HCT116 (cell line): ENCODE measurements at regions of chr22 and their contacts with region 1.

Region 1: GRCh38 chr22:50030297-50031188 is 18.0 kb upstream of the IL17REL start:
- DNase-seq: peak; percentile 75
- ATAC-seq: peak; percentile 95
- H3K4me3 ChIP-seq: peak overlapping the region; percentile 41 to 55
- H3K27ac ChIP-seq: no peak overlapping the region
- H3K4me1 ChIP-seq: peaks cover 4 to 13% of the 10 kb centered on the region in 2 experiments; a peak in 2 of 4 replicates
- H3K27me3 ChIP-seq: no peaks in the 10 kb centered on the region
- CTCF ChIP-seq: peak; percentile 82 to 98 (median 88)
- POLR2A ChIP-seq: no peak
- RAD21 ChIP-seq: peak; percentile 100

Region 2: DNA sequence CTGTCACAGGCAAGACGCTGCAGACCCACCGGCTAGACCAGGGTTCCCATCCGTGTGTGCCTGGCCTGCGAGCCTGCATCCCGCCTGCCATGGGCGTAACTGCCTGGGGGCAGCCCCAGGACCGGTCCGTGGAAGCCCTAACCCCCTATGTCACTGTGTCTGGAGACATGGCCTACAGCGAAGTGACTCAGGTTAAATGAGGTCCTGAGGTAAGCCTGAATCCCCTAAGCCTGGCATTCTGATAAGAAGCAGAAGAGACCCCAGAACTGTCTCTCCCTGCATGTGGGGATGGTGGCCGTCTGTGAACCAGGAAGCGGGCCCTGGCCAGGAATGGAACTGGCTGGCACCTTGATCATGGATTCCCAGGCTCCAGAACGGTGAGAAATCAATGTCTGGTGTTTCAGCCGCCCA is 773.0 kb before region 1 on chr22:
- CTCF ChIA-PET with region 1: no interaction called
- POLR2A ChIA-PET with region 1: no interaction called
- RAD21 ChIA-PET with region 1: no interaction called
- intact Hi-C with region 1: no loop called
- DNase-seq: no peak
- ATAC-seq: no peak
- H3K4me3 ChIP-seq: no peak overlapping the region
- H3K27ac ChIP-seq: no peak overlapping the region
- H3K4me1 ChIP-seq: peaks cover 2 to 9% of the 10 kb centered on the region in 2 experiments; a peak in 1 of 4 replicates
- H3K27me3 ChIP-seq: peaks cover 17% of the 10 kb centered on the region
- CTCF ChIP-seq: no peak
- POLR2A ChIP-seq: no peak
- RAD21 ChIP-seq: no peak

Region 3: DNA sequence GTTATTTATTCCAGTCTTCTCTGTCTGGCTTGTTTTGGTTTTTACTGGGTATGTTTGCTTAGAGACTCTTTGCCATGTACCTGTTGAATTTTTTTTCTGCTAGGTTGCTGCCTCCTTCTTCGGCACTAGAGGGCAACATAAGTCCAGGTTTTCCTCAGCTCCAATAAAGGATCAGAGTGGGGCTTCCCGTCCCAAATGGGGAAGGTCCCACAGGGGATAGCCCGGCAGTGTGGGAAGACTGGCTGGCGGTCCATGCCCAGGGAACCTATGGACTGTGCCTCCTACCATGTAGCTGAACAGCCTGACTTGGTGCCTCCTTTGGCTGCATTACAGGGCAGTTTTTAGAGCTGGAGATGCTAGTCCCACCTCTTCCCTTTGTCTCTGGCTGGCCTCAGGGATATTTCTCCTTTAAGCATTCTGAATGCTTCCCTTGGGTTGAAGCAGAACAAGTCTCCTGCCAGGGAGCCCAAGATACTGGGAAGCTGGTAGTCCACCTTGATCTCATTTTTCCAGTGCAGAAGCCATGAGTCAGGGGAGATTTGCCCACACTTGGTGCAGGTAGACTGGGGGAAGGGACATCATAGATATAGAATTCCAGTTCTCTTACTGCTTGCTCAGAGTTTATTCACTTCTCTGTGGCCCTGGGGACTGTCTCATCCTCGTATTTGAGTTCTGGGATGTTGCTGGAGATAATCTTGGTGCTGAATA is 263.0 kb before region 1 on chr22:
- CTCF ChIA-PET with region 1: interaction called, 16 read pairs
- POLR2A ChIA-PET with region 1: interaction called, 4 read pairs
- RAD21 ChIA-PET with region 1: interaction called, 3 read pairs
- intact Hi-C with region 1: loop called (anchors 1 kb)
- DNase-seq: peak; percentile 42
- ATAC-seq: peak; percentile 65
- H3K4me3 ChIP-seq: no peak overlapping the region
- H3K27ac ChIP-seq: no peak overlapping the region
- H3K4me1 ChIP-seq: no peaks in the 10 kb centered on the region
- H3K27me3 ChIP-seq: no peaks in the 10 kb centered on the region
- CTCF ChIP-seq: peak; percentile 77 to 94 (median 86)
- POLR2A ChIP-seq: no peak
- RAD21 ChIP-seq: peak; percentile 89

Region 4: DNA sequence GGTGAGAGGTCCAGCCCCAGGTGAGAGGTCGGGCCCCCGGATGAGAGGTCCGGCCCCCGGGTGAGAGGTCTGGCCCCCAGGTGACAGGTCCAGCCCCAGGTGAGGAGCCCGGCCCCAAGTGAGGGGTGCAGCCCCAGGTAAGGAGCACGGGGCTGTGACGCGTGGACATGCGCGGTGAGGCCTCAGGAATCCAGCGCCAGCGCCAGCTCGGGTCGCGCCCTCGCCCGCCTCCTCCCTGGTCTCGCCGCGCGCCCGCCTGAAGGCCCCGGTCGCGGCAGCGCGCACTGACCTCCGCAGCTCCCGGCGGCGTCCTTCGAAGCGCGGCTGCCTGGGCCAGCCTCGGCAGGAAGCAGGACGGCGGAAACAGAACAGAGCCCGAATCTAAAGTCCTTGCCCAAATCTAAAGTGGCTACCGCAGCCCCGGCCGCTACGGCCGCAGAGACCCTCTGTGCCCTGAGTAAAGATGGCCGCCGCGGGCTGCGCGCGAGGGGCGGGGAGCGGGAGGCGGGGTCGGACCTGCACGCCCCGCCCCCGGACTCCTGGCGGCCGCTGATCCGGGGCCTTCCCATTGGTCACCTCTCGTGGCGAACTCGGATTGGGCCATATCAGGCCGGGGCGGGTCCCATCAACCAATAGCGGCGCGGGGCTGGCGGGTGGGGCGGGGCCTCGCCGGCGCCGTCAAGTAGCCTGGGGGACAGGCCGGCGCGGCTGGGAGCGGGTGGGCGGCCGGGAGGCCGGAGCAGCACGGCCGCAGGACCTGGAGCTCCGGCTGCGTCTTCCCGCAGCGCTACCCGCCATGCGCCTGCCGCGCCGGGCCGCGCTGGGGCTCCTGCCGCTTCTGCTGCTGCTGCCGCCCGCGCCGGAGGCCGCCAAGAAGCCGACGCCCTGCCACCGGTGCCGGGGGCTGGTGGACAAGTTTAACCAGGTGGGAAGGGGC is 112.3 kb before region 1 on chr22 and contains the starts of genes ALG12 and CRELD2:
- CTCF ChIA-PET with region 1: interaction called, 11 read pairs
- POLR2A ChIA-PET with region 1: no interaction called
- RAD21 ChIA-PET with region 1: no interaction called
- intact Hi-C with region 1: no loop called
- DNase-seq: peak; percentile 87
- ATAC-seq: peak; percentile 95
- H3K4me3 ChIP-seq: peak within 1 kb of the TSS; percentile 76 to 82
- H3K27ac ChIP-seq: peak within 1 kb of the TSS; percentile 93
- H3K4me1 ChIP-seq: peaks cover 7 to 16% of the 10 kb centered on the region in 2 experiments; a peak in 3 of 4 replicates
- H3K27me3 ChIP-seq: no peaks in the 10 kb centered on the region
- CTCF ChIP-seq: no peak
- POLR2A ChIP-seq: peak; percentile 61
- RAD21 ChIP-seq: no peak
- total RNA-seq, gene ALG12: 16.6 TPM
- total RNA-seq, gene CRELD2: 45.8 TPM

Region 5: GRCh38 chr22:49936018-49936952 is 94.3 kb before region 1 on chr22:
- CTCF ChIA-PET with region 1: interaction called, 115 read pairs
- POLR2A ChIA-PET with region 1: interaction called, 13 read pairs
- RAD21 ChIA-PET with region 1: interaction called, 23 to 36 read pairs
- intact Hi-C with region 1: loop called (anchors 1 kb)
- DNase-seq: no peak
- ATAC-seq: peak; percentile 85
- H3K4me3 ChIP-seq: peak overlapping the region; percentile 20 to 44
- H3K27ac ChIP-seq: peak overlapping the region; percentile 75
- H3K4me1 ChIP-seq: peaks cover 27 to 42% of the 10 kb centered on the region in 2 experiments
- H3K27me3 ChIP-seq: no peaks in the 10 kb centered on the region
- CTCF ChIP-seq: no peak
- POLR2A ChIP-seq: no peak
- RAD21 ChIP-seq: no peak

Region 6: DNA sequence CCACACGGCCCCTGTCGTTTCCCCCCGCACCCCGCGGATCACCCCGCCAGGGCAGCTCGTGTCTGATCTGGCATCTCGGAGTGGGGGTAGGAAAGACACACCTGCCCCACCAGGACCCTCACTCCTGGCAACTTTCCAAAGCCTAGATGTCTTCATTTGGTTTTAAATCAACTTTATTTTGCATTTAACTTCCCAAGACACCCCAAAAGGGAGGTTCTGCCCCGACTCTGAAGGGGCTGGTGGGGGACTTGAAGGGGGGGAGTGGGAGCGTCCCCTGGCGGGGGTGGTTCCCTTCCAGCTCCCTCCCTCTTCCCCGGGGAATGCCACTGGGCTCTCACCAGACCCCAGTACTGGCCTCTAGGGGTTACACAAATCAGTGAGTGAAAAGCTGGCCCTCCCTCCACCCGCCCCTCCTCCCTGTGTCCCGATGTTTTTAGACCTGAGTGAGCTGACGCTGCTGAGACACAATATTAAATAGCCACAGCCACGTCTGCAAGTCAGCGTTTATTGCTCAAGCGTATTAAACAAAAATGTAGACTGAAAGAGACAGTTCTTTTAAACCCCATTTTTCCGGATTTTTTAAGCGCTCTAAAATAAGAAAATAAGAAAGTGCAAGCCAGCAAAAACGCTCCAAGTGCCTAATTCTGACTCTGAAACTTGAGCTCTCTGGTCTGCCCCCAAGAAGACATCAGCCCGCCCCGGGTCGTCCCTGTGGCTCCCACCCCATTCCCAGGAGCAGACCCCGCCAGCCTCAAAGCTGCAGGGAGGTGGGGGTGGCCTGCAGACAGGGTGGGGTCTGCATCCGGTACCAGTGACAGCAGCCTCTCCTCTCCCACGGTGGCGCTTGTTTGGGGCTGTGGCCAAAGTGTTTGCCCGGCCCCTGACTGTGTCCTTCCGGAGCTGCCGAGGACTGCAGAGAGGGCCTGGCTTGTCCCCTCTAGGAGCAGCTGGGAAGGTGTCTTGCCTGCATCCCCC is 28.6 kb after region 1 on chr22:
- CTCF ChIA-PET with region 1: no interaction called
- POLR2A ChIA-PET with region 1: no interaction called
- RAD21 ChIA-PET with region 1: no interaction called
- intact Hi-C with region 1: no loop called
- DNase-seq: no peak
- ATAC-seq: peak; percentile 79
- H3K4me3 ChIP-seq: no peak overlapping the region
- H3K27ac ChIP-seq: no peak overlapping the region
- H3K4me1 ChIP-seq: no peaks in the 10 kb centered on the region
- H3K27me3 ChIP-seq: no peaks in the 10 kb centered on the region
- CTCF ChIP-seq: 0 out of 6 replicates have a peak, but pooled peaks of 1 of the 3 experiments have one; percentile 11
- POLR2A ChIP-seq: no peak
- RAD21 ChIP-seq: no peak

Region 7: GRCh38 chr22:50185384-50186087 is 155.0 kb after region 1 on chr22 and contains the start of gene TRABD:
- CTCF ChIA-PET with region 1: no interaction called
- POLR2A ChIA-PET with region 1: no interaction called
- RAD21 ChIA-PET with region 1: no interaction called
- intact Hi-C with region 1: no loop called
- DNase-seq: peak; percentile 70
- ATAC-seq: peak; percentile 70
- H3K4me3 ChIP-seq: peak within 1 kb of the TSS; percentile 74 to 85
- H3K27ac ChIP-seq: peak within 1 kb of the TSS; percentile 81
- H3K4me1 ChIP-seq: peaks cover 31 to 52% of the 10 kb centered on the region in 2 experiments
- H3K27me3 ChIP-seq: no peaks in the 10 kb centered on the region
- CTCF ChIP-seq: no peak
- POLR2A ChIP-seq: peak; percentile 50
- RAD21 ChIP-seq: no peak
- total RNA-seq, gene TRABD: 90.3 TPM

Region 8: DNA sequence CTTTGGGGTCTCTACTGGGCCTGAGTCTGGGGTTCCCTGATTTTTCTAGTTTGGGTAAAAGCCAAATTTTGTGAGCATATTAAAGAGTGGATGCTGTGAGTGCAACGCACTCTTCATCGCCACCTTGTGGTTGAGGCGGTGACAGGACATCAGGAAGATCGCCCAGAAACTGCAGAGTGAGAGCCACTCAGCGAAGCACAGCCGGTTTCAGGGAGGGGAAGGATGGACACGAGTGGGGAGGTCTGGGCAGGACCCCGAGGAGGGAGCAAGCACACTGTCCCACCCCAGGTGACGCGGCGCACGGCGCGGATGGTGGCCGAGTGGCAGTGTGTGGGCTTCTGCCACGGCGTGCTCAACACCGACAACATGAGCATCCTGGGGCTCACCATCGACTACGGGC is 179.3 kb after region 1 on chr22:
- CTCF ChIA-PET with region 1: no interaction called
- POLR2A ChIA-PET with region 1: no interaction called
- RAD21 ChIA-PET with region 1: no interaction called
- intact Hi-C with region 1: no loop called
- DNase-seq: no peak
- ATAC-seq: peak; percentile 67
- H3K4me3 ChIP-seq: no peak overlapping the region
- H3K27ac ChIP-seq: no peak overlapping the region; the same call in 1 of the 2 replicates
- H3K4me1 ChIP-seq: peaks cover 0 to 16% of the 10 kb centered on the region in 2 experiments; a peak in 2 of 4 replicates
- H3K27me3 ChIP-seq: no peaks in the 10 kb centered on the region
- CTCF ChIP-seq: peak; percentile 75 to 89 (median 89)
- POLR2A ChIP-seq: no peak
- RAD21 ChIP-seq: peak; percentile 71